AG04450 (cell line): ENCODE measurements at regions of chr2 and their contacts with region 1.

Region 1: GRCh38 chr2:84838434-84839145 is 42.3 kb downstream of the TRABD2A start:
- DNase-seq: peak; percentile 77
- H3K4me3 ChIP-seq: no peak overlapping the region
- H3K27ac ChIP-seq: peak overlapping the region; percentile 76
- H3K27me3 ChIP-seq: no peaks in the 10 kb centered on the region
- CTCF ChIP-seq: no peak

Region 2: GRCh38 chr2:83420993-83421392 is 1417.6 kb before region 1 on chr2:
- CTCF ChIA-PET with region 1: no interaction called
- POLR2A ChIA-PET with region 1: no interaction called
- DNase-seq: no peak
- H3K4me3 ChIP-seq: no peak overlapping the region
- H3K27ac ChIP-seq: no peak overlapping the region
- H3K27me3 ChIP-seq: no peaks in the 10 kb centered on the region
- CTCF ChIP-seq: no peak

Region 3: DNA sequence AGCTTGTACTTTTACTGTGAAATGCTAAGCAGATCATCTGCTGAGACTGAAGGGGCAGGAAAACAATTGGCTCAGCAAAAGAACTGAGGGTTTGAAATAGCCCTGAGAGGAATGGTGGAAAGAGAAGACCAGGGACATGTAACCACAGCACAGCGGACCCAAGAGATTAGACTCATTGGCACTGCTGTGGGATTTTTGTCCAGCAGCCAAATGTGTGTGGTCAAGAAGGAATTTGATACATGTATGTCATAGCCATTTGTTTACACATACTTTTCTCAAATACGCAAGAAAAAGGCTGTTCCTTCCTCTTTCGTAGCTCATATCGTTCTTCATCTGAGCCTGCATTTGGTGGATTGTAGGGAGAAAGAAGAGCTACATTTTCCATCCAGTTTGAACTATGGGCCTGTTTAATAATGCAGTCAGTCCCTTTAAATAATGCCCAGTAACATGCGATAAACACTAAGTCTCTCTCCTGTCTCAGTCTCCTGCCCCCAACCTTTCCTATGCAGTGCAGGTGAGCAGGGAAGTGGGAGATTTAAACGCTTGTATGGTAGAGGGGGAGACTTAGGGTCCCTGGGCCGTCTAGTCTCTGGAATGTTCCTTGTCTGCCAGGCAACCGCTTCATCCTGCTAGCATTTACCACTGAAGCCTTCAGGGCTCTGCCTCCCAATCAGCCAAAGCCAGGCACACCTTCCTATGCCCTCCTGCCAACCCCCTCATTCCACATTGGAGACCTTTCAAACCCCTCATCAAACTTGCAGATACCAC is 31.3 kb before region 1 on chr2:
- CTCF ChIA-PET with region 1: interaction called, 4 read pairs
- POLR2A ChIA-PET with region 1: interaction called, 10 read pairs
- DNase-seq: peak; percentile 97
- H3K4me3 ChIP-seq: peak overlapping the region; percentile 27
- H3K27ac ChIP-seq: peak overlapping the region; percentile 99
- H3K27me3 ChIP-seq: no peaks in the 10 kb centered on the region
- CTCF ChIP-seq: no peak

Region 4: DNA sequence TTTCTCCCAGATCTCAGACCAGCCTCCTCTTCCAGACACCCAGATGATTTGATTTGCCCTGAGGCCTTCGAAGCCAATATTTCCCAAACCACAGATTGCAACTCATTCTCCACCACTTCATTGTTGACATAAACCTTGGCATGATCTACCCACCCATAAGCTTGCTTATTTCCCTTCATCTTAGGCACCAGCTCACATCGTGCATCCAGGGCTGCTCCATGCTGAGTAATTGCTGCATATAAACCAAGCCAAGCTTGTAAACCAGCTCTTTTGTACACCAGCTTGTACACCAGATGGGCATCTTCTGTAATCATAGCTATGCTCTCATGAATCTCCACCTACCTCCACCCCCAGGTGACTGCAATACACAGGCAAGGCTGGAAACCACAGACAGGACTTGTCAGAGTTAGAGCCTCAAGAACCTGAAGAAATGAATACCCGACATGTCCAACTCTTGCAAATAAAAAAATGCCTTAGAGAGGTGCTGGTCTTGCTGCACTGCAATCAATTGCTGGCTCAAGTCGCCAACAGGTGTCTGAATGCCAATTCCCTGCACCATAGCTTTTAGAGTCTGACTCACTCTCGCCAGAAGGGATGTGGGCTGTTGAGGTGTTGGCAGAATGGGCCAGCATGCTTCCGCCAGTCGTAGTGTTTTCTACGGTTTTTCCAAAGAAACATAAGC is 10.8 kb after region 1 on chr2:
- CTCF ChIA-PET with region 1: no interaction called
- POLR2A ChIA-PET with region 1: interaction called, 11 read pairs
- DNase-seq: no peak
- H3K4me3 ChIP-seq: no peak overlapping the region
- H3K27ac ChIP-seq: no peak overlapping the region
- H3K27me3 ChIP-seq: no peaks in the 10 kb centered on the region
- CTCF ChIP-seq: no peak